Posterior vena cava (tissue), 2 donors: ENCODE measurements at regions of chr17 and their contacts with region 1.

Region 1: DNA sequence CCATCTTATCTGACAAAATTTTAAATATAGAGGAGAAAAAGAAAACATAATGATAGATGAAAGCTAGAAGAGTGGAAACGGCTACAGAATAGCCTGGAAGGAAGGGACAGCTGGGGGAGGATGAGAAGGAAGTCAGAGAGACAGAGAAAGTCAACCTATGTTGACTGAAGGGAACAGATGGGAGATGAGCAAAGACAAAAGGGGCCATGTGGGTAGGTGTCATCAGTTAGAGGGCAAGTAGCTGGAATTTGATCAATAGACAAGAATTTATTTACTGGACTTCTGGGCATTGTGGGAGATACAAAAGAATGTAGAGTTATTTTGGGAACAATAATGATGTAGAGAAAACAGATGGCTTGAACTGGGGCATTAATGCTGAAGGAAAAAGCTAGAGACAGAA is 194.4 kb downstream of the ANKFN1 start:
- DNase-seq: no peak

Region 2: DNA sequence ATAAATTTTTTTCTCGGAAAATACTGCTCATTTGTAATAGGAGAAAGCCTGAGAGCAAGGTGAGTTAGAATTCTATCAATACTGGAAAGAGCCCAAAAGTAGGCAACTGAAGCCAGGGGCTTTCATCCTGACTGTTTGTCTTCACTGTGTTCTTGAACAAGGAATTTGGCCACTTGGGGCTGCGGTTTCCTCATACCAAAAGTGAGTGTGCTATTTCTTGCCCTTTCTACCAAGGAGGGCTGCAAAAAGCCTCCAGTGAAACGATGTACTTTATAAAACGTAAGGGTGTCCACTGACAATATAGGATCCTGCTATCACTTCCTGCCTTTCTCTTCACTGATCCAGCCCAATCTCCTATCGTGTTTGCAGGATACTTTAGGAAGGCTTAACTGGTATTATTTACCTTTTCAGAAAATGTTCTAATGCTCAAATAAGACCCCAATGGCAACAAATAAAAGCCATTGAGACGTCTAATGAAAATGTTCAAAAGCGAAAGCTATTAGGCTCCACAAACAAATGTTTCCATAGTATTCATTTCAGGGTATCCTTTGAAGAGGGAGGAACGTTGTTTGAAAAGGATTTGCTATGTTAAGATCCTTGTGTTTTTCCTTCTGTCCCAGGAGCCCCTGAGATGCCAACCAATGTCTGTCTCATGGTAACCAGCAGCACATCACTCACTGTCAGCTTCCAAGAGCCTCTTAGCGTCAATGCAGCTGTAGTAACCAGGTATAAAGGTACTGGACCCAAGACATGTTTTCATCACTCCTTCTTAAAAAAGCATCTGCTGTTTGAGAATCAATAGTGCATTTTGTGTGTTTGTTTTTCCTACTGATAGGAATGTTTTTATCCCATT is 26.6 kb after region 1 on chr17:
- intact Hi-C with region 1: loop called in 1 of 2 experiments (anchors 1 kb)
- DNase-seq: no peak

Region 3: GRCh38 chr17:56424543-56425044 is 77.0 kb after region 1 on chr17:
- intact Hi-C with region 1: no loop called
- DNase-seq: no peak